ENCODE measurements at regions of chr17 and their contacts with region 1.

Region 1: DNA sequence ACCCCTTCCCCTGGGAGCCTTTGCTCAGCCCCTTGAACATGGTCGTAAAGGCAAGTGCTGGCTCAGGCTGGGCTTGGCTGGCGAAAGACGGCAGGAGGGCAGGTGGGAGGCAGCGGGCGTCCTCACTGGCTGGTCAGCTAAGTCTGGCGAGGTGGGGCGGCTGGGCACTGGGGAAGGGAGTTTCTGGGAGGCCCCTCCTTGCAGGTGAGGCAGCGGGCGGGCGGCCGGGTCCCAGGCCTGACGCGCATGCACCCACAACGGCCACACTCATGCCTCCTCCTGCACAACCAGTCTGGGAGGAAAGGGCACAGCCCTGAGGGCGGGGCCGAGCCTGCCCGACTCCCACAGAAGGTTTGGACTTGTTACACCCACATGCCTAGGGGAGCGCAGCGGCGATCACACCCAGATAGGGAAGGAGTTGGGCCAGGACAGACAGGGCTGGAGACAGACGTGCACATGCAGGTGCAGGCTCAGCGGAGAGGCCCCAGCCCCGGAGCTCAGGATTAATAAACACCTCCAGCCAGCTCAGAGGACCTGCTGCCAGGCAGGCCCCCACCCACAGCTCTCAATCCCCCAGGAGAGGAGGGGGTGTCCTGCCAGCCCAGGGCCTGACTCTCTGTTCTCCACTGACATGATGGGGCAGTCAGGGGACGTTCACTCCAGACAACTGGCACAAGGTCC is at the start of gene EVPL:
- DNase-seq: no peak
- total RNA-seq, gene EVPL: 0.08 and 0.16 TPM in 2 replicates

Region 2: GRCh38 chr17:76107509-76107908 is 80.2 kb after region 1 on chr17:
- in situ Hi-C with region 1: no loop called
- DNase-seq: peak; percentile 66

Region 3: GRCh38 chr17:76182016-76182764 is 154.9 kb after region 1 on chr17:
- in situ Hi-C with region 1: loop called (anchors 25 kb)
- DNase-seq: peak; percentile 99

Measured in SK-MEL-5 (cell line).